ENCODE measurements at regions of chr10 and their contacts with region 1.

Region 1: DNA sequence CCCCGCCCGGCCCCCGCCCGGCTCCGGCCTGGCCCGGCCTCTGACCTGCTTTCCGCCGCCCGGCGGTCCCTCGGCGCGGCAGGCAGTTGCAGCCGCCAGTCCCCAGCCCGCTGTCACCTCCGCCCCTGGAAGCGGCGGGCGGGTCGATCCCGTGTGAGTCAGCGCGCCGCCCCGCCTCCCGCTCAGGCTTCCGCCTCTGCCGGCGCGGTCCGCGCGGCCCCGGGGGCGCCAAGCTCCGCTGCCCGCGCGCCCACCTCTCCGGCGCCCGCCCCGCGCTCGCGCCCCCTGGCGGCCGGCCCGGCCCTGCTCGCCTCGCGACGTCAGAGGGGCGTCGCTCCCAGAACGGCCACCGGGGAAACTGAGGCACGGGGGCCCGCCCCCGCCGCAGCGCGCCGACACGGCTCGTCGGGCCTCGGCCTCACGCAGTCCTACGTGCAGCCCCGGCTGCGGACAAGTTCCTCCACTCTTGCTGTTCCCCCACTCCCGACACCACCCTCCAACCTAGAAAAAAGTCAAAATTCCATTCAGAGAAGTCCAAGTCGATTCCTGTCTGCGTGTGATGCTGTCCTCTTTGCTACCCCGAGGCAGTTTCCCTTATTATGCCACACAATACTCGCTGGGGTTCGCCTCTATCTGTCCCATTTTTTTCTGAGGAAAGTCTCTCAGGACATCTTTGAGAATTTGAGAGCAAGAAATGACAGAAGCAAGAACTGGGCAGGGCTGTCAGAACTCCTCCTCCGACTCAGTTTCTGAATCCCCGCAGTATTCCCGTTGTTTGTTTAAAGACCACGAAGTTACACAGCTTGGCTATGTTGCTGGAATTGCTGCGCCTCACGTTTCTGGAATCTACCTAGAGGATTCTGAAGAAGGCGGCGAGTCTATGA is at the start of gene DNMBP:
- DNase-seq: peak; percentile 82 to 88
- ATAC-seq: peak; percentile 87 to 97 (median 94)
- H3K4me3 ChIP-seq: peak within 1 kb of the TSS; percentile 50 to 97 (median 82)
- H3K27ac ChIP-seq: peak within 1 kb of the TSS; percentile 82 to 95 (median 86)
- H3K4me1 ChIP-seq: peaks cover 3 to 48% (median 34%) of the 10 kb centered on the region in 9 donors
- H3K27me3 ChIP-seq: no peaks in the 10 kb centered on the region
- CTCF ChIP-seq: peak; percentile 44 to 73 (median 58)
- total RNA-seq, gene DNMBP: 5.4 to 8.1 (median 7.1) TPM

Region 2: GRCh38 chr10:99845837-99846382 is 164.1 kb before region 1 on chr10:
- intact Hi-C with region 1: loop called in 5 of 10 experiments (anchors 5 to 10 kb)
- DNase-seq: peak; percentile 34 to 82
- ATAC-seq: peak; percentile 85 to 97 (median 94)
- H3K4me3 ChIP-seq: peak overlapping the region; percentile 4 to 51 (median 35)
- H3K27ac ChIP-seq: no peak overlapping the region
- H3K4me1 ChIP-seq: peaks cover 0 to 12% (median 6%) of the 10 kb centered on the region in 9 donors
- H3K27me3 ChIP-seq: no peaks in the 10 kb centered on the region
- CTCF ChIP-seq: peak; percentile 89 to 95 (median 90)

Region 3: DNA sequence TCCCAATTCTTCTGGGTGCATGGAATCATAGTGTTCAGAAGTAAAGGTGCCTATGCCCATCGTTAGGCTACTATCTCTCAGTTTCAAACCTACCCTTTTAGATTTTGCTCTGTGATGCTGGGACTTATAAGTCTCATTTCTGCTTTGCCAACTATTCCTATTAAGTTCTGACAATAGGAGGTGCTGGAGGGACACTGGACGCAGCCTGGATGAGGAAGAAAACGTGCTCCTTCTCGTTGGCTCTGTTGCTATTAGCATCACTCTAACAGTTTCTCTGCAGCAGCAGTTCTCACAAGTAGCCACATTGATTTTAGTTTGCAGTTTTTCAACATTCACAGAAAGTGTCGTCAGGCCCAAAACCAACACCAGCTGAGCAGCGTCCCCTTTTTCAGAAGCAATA is 155.2 kb before region 1 on chr10:
- intact Hi-C with region 1: loop called in 1 of 10 experiments (anchors 10 kb)
- DNase-seq: peak in 1 of 2 donors; percentile 38
- ATAC-seq: peak in 6 of 8 donors; percentile 46 to 75 (median 66)
- H3K4me3 ChIP-seq: no peak overlapping the region
- H3K27ac ChIP-seq: no peak overlapping the region
- H3K4me1 ChIP-seq: no peaks in the 10 kb centered on the region
- H3K27me3 ChIP-seq: no peaks in the 10 kb centered on the region
- CTCF ChIP-seq: peak in 7 of 9 donors; percentile 43 to 67 (median 57)

Region 4: GRCh38 chr10:99917963-99918825 is 91.8 kb before region 1 on chr10:
- intact Hi-C with region 1: loop called in 5 of 10 experiments (anchors 5 to 10 kb)
- DNase-seq: peak in 1 of 2 donors; percentile 44
- ATAC-seq: peak in 7 of 8 donors; percentile 60 to 79 (median 72)
- H3K4me3 ChIP-seq: peak overlapping the region in 9 of 10 donors; percentile 18 to 48 (median 37)
- H3K27ac ChIP-seq: peak overlapping the region in 7 of 10 donors; percentile 22 to 75 (median 57)
- H3K4me1 ChIP-seq: peaks cover 0 to 37% (median 15%) of the 10 kb centered on the region in 9 donors
- H3K27me3 ChIP-seq: no peaks in the 10 kb centered on the region
- CTCF ChIP-seq: no peak

Region 5: GRCh38 chr10:99926925-99927720 is 82.9 kb before region 1 on chr10:
- intact Hi-C with region 1: loop called in 1 of 10 experiments (anchors 10 kb)
- DNase-seq: peak; percentile 50 to 76
- ATAC-seq: peak; percentile 53 to 89 (median 71)
- H3K4me3 ChIP-seq: peak overlapping the region in 1 of 10 donors; percentile 5
- H3K27ac ChIP-seq: peak overlapping the region in 5 of 10 donors; percentile 2 to 73 (median 46)
- H3K4me1 ChIP-seq: peaks cover 0 to 62% (median 34%) of the 10 kb centered on the region in 9 donors
- H3K27me3 ChIP-seq: no peaks in the 10 kb centered on the region
- CTCF ChIP-seq: no peak

Region 6: DNA sequence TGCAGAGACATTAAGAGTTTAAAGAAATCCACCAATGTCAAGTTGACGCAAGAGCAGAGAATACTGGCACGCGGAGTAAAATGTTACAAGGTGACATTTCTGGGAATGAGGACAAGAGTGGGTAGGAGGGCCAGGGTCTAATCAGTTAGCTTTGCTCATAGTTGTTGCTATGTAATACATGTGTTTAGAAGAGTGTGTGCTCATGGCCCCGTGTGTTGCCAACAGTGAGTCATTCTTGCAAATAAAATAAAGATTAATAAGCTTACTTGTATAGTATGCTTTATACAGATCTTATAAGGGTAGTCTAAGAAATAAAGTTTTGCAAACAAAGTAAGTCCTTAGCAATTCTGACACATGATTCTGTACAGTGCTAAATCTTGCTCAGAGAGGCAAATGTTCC is 64.8 kb before region 1 on chr10:
- intact Hi-C with region 1: no loop called
- DNase-seq: peak in 1 of 2 donors; percentile 27
- ATAC-seq: peak; percentile 52 to 99 (median 87)
- H3K4me3 ChIP-seq: no peak overlapping the region
- H3K27ac ChIP-seq: peak overlapping the region in 2 of 10 donors; percentile 11 to 17
- H3K4me1 ChIP-seq: peaks cover 0 to 37% (median 19%) of the 10 kb centered on the region in 9 donors
- H3K27me3 ChIP-seq: no peaks in the 10 kb centered on the region
- CTCF ChIP-seq: no peak

Region 7: GRCh38 chr10:99976886-99977665 is 33.0 kb before region 1 on chr10:
- intact Hi-C with region 1: loop called in 2 of 10 experiments (anchors 5 kb)
- DNase-seq: no peak
- ATAC-seq: peak; percentile 46 to 93 (median 83)
- H3K4me3 ChIP-seq: peak overlapping the region in 1 of 10 donors; percentile 4
- H3K27ac ChIP-seq: peak overlapping the region; percentile 21 to 80 (median 68)
- H3K4me1 ChIP-seq: peaks cover 0 to 67% (median 51%) of the 10 kb centered on the region in 9 donors
- H3K27me3 ChIP-seq: no peaks in the 10 kb centered on the region
- CTCF ChIP-seq: no peak

Region 8: DNA sequence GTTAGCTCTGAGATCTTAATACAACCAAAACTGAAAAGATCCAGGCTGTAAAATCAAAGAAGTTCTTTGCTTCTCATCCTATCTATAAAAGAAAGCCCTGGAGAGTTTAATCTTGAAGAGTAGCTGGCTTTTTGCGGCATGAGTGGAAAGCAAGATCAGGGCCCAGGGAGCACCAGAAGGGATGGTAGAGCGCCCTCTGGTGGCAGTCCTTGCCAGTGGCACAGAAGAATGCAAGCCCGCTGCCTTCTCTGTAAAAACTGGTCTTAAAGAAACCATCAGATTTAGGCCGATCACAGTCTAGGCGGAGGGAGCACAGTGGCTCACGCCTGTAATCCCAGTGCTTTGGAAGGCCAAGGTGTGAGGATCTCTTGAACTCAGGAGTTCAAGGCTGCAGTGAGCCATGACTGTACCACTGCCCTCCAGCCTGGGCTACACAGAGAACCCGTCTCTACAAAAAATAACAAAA is 36.0 kb after region 1 on chr10:
- intact Hi-C with region 1: loop called in 4 of 10 experiments (anchors 1 to 5 kb)
- DNase-seq: peak; percentile 90
- ATAC-seq: peak; percentile 74 to 90 (median 80)
- H3K4me3 ChIP-seq: no peak overlapping the region
- H3K27ac ChIP-seq: peak overlapping the region in 6 of 10 donors; percentile 2 to 80 (median 30)
- H3K4me1 ChIP-seq: peaks cover 0 to 36% (median 29%) of the 10 kb centered on the region in 9 donors
- H3K27me3 ChIP-seq: no peaks in the 10 kb centered on the region
- CTCF ChIP-seq: peak; percentile 90 to 98 (median 96)

Region 9: GRCh38 chr10:100307701-100308100 is 297.7 kb after region 1 on chr10:
- intact Hi-C with region 1: no loop called
- DNase-seq: no peak
- ATAC-seq: no peak
- H3K4me3 ChIP-seq: no peak overlapping the region
- H3K27ac ChIP-seq: no peak overlapping the region
- H3K4me1 ChIP-seq: no peaks in the 10 kb centered on the region
- H3K27me3 ChIP-seq: peaks cover 0 to 88% (median 54%) of the 10 kb centered on the region in 7 donors
- CTCF ChIP-seq: no peak

Measured in heart right ventricle (tissue), 16 donors.